ENCODE measurements at regions of chr20 and their contacts with region 1.

Region 1: GRCh38 chr20:44210422-44211176 is at the start of gene OSER1:
- DNase-seq: peak; percentile 98
- CTCF ChIP-seq: no peak

Region 2: GRCh38 chr20:44310664-44311639 is 100.4 kb after region 1 on chr20 and contains the start of gene FITM2:
- in situ Hi-C with region 1: loop called (anchors 10 kb)
- DNase-seq: peak; percentile 99
- CTCF ChIP-seq: peak; percentile 99